ENCODE measurements at regions of chr14 and their contacts with region 1.

Region 1: DNA sequence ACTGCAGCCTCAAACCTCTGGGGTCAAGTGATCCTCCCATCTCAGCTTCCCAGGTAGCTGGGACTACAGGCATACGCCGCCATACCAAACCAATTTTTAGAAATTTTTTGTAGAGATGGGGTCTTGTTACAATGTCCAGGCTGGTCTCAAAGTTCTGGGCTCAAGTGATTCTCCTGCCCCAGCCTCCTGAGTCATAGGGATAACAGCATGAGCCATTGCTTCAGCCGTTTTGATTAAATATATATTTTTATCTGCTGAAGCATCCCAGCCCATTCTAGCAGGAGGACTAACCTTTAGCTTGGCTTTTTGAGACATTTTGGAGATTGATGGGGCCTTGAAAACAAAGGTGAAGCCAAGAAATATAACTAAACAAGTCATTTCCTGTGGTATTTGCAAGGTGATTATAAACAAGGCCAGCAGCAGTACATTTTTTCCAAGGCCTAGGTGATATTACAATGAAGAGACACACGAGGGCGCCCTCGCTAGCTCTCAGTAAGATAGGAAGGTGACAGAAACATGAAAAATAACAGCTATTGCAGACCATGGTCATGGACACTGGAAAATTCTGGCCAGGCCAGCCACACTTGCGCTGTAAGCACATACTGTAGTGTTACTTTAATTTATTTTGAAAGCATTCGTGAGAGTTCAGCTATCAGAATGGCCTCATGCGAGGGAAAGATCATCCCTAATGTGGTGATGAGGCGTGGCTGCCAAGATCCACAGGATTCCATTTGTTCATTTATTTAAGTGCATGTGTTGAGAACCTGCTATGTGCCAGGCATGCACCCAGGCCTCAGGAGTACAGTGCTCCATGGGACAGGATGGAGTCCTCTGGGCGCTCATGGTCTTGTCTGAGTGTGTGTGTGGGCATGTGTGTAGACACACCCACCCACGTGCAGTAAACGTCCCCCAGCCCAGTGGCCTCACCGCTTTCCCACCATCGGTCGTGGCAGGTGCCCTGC is 63.5 kb downstream of the DGLUCY start:
- DNase-seq: peak; percentile 80
- H3K4me3 Mint-ChIP-seq: no peak overlapping the region
- H3K27ac Mint-ChIP-seq: peak overlapping the region; percentile 84
- H3K4me1 Mint-ChIP-seq: peaks cover 14% of the 10 kb centered on the region
- H3K27me3 Mint-ChIP-seq: no peaks in the 10 kb centered on the region

Region 2: DNA sequence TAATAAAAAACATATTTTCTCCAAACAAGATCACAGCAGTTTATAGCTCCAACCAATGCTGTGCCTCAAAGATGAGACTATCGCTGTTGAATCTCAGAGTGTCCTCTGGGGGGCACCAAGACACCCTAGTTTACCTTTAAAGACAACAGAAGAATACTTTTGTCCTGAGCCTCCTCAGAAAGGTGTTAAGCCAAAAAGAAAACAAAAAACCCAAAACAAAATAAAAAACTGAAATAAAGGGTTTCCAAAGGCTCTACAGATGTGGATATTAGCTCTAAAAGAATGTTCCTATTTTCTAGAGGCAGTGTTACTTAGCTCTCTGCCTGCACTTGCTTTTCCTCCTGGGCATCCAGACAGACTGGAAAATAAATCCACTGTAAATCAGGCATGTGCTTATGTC is 274.3 kb before region 1 on chr14:
- CTCF ChIA-PET with region 1: interaction called, 255 read pairs
- POLR2A ChIA-PET with region 1: no interaction called
- intact Hi-C with region 1: loop called (anchors 1 kb)
- DNase-seq: peak; percentile 63
- H3K4me3 Mint-ChIP-seq: no peak overlapping the region
- H3K27ac Mint-ChIP-seq: no peak overlapping the region
- H3K4me1 Mint-ChIP-seq: peaks cover 26% of the 10 kb centered on the region
- H3K27me3 Mint-ChIP-seq: no peaks in the 10 kb centered on the region

Region 3: DNA sequence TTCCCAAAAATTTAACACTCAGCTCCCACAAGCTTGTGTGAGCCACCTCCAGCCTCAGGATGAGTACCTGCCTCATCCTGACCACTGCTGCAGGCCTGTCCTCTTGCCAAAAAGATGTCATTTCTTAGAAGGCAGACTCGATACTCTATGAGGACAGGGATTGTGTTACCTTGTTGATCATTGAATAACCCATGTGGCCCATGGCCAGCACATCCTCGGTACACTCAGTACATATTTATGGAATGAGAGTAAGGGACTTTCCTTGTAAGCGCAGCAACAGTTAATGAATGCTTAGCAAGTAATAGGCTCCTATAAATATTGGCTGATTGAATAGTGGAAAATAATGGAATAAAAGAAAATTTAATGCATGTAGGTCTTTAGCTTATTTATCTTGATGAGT is 78.8 kb before region 1 on chr14:
- CTCF ChIA-PET with region 1: interaction called, 10 read pairs
- POLR2A ChIA-PET with region 1: no interaction called
- intact Hi-C with region 1: no loop called
- DNase-seq: no peak
- H3K4me3 Mint-ChIP-seq: no peak overlapping the region
- H3K27ac Mint-ChIP-seq: no peak overlapping the region
- H3K4me1 Mint-ChIP-seq: peaks cover 18% of the 10 kb centered on the region
- H3K27me3 Mint-ChIP-seq: no peaks in the 10 kb centered on the region

Region 4: DNA sequence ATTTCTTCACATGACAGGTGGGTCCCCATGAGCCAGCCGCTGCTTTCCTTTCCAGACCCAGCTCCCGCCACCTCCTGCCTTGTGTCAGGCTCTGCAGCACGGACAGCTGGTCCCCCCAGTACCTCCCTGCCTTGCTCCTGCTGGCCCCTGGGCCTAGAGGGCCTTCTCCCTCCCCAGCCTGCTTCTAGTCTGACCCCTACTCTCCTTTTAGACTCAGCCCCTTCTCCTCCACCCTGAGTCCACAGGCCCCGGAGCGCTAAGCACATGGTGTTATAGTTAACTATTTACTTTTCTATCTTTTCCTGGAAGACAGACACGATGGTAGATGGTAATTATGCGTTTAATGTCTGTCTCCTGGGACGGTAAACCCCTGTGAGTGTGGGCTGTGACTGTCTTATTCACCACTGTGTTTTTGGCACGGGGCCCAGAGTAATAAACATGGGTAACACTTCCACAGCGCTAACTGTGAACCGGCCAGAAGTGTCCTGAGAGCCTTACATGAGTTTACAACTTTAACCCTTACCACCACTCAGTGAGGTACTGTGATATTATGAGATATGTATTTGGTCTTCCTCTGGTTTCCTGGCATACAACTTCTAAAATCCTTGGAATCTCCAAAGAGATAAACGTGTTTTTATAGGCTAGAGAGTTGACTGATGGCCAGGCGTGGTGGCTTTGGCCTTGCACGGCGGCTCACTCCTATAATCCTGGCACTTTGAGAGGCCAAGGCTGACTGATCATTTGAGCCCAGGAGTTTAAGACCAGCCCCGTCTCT is 22.3 kb before region 1 on chr14:
- CTCF ChIA-PET with region 1: interaction called, 12 read pairs
- POLR2A ChIA-PET with region 1: no interaction called
- intact Hi-C with region 1: no loop called
- DNase-seq: peak; percentile 31
- H3K4me3 Mint-ChIP-seq: no peak overlapping the region
- H3K27ac Mint-ChIP-seq: no peak overlapping the region
- H3K4me1 Mint-ChIP-seq: peaks cover 9% of the 10 kb centered on the region
- H3K27me3 Mint-ChIP-seq: no peaks in the 10 kb centered on the region

Region 5: GRCh38 chr14:91228112-91229004 is 51.0 kb after region 1 on chr14:
- CTCF ChIA-PET with region 1: interaction called, 33 read pairs
- POLR2A ChIA-PET with region 1: no interaction called
- intact Hi-C with region 1: loop called (anchors 1 kb)
- DNase-seq: peak; percentile 95
- H3K4me3 Mint-ChIP-seq: peak overlapping the region; percentile 59
- H3K27ac Mint-ChIP-seq: peak overlapping the region; percentile 94
- H3K4me1 Mint-ChIP-seq: peaks cover 94% of the 10 kb centered on the region
- H3K27me3 Mint-ChIP-seq: no peaks in the 10 kb centered on the region

Region 6: GRCh38 chr14:91258011-91258618 is 80.8 kb after region 1 on chr14:
- CTCF ChIA-PET with region 1: interaction called, 17 read pairs
- POLR2A ChIA-PET with region 1: no interaction called
- intact Hi-C with region 1: no loop called
- DNase-seq: peak; percentile 53
- H3K4me3 Mint-ChIP-seq: peak overlapping the region; percentile 9
- H3K27ac Mint-ChIP-seq: peak overlapping the region; percentile 69
- H3K4me1 Mint-ChIP-seq: peaks cover 69% of the 10 kb centered on the region
- H3K27me3 Mint-ChIP-seq: no peaks in the 10 kb centered on the region

Region 7: GRCh38 chr14:91418387-91419043 is 241.2 kb after region 1 on chr14:
- CTCF ChIA-PET with region 1: interaction called, 6 read pairs
- POLR2A ChIA-PET with region 1: no interaction called
- intact Hi-C with region 1: loop called (anchors 5 kb)
- DNase-seq: peak; percentile 88
- H3K4me3 Mint-ChIP-seq: peak overlapping the region; percentile 61
- H3K27ac Mint-ChIP-seq: peak overlapping the region; percentile 72
- H3K4me1 Mint-ChIP-seq: peaks cover 32% of the 10 kb centered on the region
- H3K27me3 Mint-ChIP-seq: no peaks in the 10 kb centered on the region

Region 8: DNA sequence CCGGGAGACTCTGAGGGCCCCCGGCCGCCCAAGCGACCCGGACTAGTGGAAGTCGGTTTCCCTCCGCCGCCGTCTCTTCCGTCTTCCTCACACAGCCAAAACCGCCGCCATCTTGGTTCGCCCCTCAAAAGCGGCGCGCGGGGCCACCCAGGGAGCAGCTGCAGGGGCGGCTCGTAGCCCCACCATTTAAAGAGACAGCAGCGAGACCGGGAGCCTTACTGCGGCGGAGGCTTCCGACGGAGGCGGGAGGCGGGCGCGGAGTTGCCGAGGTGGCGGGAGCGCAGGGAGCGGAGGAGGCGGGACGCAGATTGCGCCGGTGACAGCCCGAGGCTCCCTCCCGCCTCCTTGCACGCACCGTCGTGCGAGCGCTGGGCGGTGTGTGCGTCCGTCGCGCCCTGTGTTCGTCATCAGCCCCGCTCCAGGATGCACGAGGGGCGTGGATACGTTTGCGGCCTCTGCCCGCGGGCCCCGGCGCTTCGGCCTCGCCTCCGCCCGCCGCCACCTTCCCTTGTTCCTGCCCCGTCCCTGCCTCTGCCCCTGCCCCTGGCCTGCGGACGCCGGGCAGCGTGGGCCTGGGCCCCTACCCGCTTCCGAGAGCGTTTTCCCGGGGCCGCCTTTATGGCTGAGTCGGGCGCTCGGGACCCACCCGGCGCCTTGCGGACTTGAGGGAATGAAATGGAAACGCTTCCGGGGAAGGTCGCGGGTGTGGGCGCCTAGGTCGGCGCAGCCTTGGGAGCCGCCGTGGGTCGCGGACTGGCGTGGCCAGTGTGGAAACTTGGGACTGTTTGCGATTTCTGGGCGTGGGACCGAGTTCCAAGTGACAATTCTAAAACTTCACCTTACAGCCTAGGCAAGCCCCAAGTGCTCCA is 333.1 kb after region 1 on chr14 and contains the start of gene PPP4R3A:
- CTCF ChIA-PET with region 1: no interaction called
- POLR2A ChIA-PET with region 1: no interaction called
- intact Hi-C with region 1: no loop called
- DNase-seq: peak; percentile 96
- H3K4me3 Mint-ChIP-seq: peak within 1 kb of the TSS; percentile 94
- H3K27ac Mint-ChIP-seq: peak within 1 kb of the TSS; percentile 95
- H3K4me1 Mint-ChIP-seq: peaks cover 20% of the 10 kb centered on the region
- H3K27me3 Mint-ChIP-seq: no peaks in the 10 kb centered on the region
- total RNA-seq, gene PPP4R3A: 92.4 to 96.4 TPM